ENCODE measurements at regions of chr16 and their contacts with region 1.

Region 1: GRCh38 chr16:89708441-89708931 is 7.0 kb upstream of the SPATA2L start:
- DNase-seq: no peak
- ATAC-seq: no peak
- H3K4me3 ChIP-seq: no peak overlapping the region
- H3K27ac ChIP-seq: no peak overlapping the region
- H3K4me1 ChIP-seq: no peaks in the 10 kb centered on the region
- H3K27me3 ChIP-seq: no peaks in the 10 kb centered on the region
- CTCF ChIP-seq: no peak
- EP300 ChIP-seq: no peak
- POLR2A ChIP-seq: no peak
- RAD21 ChIP-seq: no peak

Region 2: DNA sequence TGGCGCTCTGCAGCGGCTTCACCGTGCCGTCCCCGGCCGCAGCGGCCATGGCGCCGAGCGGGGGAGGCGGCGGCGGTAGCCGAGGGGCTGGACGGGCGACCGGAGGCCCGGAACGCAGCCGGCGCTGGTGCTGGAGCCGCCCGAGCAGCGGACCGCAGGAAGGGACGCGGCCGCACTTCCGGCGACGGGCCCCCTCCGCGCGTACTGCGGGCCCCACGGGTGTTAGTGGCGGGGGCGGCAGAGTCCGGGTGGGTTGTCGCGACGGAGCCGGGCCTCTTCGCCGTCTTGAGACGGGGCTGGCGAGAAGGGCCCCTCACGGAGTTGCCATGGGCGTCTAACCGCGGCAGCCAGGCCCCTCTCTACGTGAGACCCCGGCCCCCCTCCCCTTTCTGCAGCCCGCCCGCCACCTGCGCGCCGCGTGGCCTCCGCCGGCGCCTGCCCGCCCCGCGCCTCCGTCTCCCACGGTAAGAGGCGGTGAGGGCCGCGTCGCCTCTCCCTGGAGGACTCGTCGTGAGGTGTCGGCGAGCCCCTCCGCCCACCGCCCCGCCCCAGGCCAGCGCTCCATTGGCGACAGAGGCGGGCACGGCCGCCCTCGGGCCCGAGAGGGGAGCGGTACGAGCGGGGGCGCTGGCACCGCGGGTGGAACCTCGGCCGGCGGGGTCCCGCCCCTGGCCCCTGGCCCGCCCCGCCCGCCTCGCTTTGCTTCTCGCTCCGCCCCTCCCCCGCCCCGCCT is 12.5 kb after region 1 on chr16 and contains the starts of genes VPS9D1 and ZNF276:
- CTCF ChIA-PET with region 1: no interaction called
- POLR2A ChIA-PET with region 1: interaction called, 12 read pairs
- in situ Hi-C with region 1: no loop called
- intact Hi-C with region 1: loop called (anchors 1 kb)
- DNase-seq: peak; percentile 65
- ATAC-seq: peak; percentile 77
- H3K4me3 ChIP-seq: peak within 1 kb of the TSS; percentile 72 to 89 (median 82)
- H3K27ac ChIP-seq: peak within 1 kb of the TSS; percentile 97
- H3K4me1 ChIP-seq: peaks cover 39% of the 10 kb centered on the region
- H3K27me3 ChIP-seq: no peaks in the 10 kb centered on the region; a peak in 1 of 5 replicates
- CTCF ChIP-seq: peak; percentile 30; the same call in 1 of the 2 replicates
- EP300 ChIP-seq: peak; percentile 46 to 59; a peak in 2 of 4 replicates
- POLR2A ChIP-seq: peak; percentile 63 to 78; a peak in 3 of 4 replicates
- RAD21 ChIP-seq: peak; percentile 51
- total RNA-seq, gene VPS9D1: 3.8 and 10.1 TPM in 2 replicates
- total RNA-seq, gene ZNF276: 6.8 and 17.7 TPM in 2 replicates

Region 3: DNA sequence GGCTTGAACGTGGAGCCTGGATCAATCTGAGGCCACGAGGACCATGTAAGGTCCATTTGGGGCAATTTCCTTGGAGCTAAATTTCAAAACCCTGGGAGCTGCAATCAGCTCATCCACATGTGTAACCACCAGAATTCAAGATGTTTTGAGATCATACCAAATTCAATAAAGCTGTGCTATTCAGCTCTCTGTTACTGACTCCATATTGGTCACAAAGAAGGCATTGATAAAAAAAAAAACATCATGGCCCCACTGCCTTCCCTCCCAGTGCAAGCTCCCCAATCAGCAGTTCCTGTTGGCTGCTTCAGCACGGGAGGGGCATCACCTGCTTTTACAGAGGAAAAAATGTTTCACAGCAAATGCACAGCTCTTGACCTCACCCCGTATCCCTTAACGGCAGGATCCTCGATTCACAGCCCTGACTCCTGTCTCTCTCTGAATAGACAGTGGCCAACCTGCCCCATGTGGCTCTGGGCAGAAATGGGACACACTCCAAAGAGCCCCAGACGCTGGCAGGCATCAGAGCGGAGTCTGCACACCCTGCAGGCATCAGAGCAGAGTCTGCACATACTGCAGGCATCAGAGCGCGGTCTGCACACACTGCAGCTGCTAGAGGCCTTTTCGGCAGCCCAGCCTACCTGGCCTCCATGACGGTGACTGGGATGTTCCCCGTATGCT is 70.9 kb after region 1 on chr16:
- CTCF ChIA-PET with region 1: no interaction called
- POLR2A ChIA-PET with region 1: no interaction called
- in situ Hi-C with region 1: loop called (anchors 5 kb)
- intact Hi-C with region 1: no loop called
- DNase-seq: no peak
- ATAC-seq: no peak; the same call in 2 of the 3 replicates
- H3K4me3 ChIP-seq: no peak overlapping the region
- H3K27ac ChIP-seq: no peak overlapping the region
- H3K4me1 ChIP-seq: no peaks in the 10 kb centered on the region
- H3K27me3 ChIP-seq: no peaks in the 10 kb centered on the region
- CTCF ChIP-seq: no peak
- EP300 ChIP-seq: no peak
- POLR2A ChIP-seq: no peak
- RAD21 ChIP-seq: no peak